ENCODE measurements at regions of chr1 and their contacts with region 1.

Region 1: DNA sequence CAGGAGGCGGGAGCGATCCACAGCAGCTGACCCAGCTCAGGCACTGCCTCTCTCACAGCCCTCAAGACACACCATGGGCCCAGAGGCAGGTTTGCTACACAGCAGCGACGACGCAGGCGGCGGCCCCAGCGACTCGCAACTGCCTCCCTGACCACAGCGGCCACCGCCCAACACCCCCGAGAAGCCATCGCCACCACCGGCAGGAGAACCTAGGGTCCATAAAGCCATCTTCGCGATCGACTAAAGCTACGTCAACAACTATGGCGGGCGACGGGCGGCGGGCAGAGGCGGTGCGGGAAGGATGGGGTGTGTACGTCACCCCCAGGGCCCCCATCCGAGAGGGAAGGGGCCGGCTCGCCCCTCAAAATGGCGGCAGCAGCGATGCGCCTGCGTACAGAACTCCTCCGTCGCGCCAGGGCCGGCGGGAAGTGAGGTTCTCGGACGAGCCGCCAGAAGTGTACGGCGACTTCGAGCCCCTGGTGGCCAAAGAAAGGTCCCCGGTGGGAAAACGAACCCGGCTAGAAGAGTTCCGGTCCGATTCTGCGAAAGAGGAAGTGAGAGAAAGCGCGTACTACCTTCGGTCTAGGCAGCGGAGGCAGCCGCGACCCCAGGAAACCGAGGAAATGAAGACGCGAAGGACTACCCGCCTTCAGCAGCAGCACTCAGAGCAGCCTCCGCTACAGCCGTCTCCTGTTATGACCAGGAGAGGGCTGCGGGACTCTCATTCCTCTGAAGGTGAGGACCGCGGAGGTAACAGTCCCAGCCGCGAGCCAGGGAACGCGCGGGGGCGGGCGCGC is at the start of gene TOR1AIP1:
- H3K4me3 Mint-ChIP-seq: peak within 1 kb of the TSS; percentile 85
- H3K27ac Mint-ChIP-seq: peak within 1 kb of the TSS; percentile 98
- H3K4me1 Mint-ChIP-seq: peaks cover 23% of the 10 kb centered on the region
- H3K27me3 Mint-ChIP-seq: no peaks in the 10 kb centered on the region

Region 2: DNA sequence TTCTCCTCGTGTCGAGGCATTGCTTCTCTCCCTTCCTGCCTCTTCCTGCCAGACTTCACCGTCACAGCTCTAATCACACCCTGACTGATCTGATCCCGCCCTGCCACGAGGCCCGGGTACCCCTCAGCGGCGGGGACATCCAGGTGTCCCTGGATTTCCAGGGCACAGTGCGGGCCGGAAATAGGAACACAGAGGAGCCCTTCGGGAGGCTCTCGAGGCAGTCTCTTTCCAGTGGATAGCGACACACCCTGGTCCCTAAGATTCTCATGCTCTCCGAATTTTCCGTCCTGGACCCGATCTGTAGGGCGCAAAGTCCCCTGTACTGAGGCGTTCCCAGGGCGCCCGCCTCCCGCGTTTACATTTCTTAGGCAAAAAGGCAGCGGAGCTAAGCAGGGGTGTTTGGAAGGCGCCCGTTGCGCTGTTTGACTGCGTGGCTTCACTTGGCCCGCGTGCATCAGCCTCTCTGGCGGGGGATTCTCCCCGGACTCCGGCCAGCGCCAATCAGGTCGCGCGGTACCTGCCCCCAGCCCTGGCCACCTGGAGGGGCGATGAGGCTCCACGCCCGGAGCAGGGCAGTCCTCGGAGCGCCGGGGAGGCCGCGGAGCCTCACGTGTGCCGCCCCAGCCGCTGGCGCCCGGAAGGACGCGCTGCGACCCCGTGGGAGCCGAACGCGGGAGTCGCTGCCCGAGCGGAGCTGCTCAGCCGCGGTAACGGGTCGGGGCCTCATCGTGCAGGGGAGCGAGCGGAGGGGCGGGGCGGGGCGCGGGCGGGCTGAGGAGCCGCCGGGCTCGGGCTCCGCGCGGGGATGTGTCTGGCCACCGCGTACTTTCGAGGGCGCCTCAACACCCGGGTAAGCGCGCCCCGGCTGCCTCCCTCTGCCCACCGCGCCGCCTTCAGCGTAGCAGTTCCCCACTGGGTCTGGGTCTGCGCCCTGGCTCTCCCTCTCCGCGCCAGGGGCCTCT is 139.4 kb before region 1 on chr1 and contains the start of gene FAM163A:
- intact Hi-C with region 1: no loop called
- H3K4me3 Mint-ChIP-seq: peak within 1 kb of the TSS; percentile 41
- H3K27ac Mint-ChIP-seq: no peak within 1 kb of the TSS
- H3K4me1 Mint-ChIP-seq: peaks cover 13% of the 10 kb centered on the region
- H3K27me3 Mint-ChIP-seq: peaks cover 73% of the 10 kb centered on the region

Region 3: GRCh38 chr1:179954493-179955297 is 72.3 kb after region 1 on chr1 and contains the start of gene CEP350:
- intact Hi-C with region 1: loop called (anchors 2 kb)
- H3K4me3 Mint-ChIP-seq: peak within 1 kb of the TSS; percentile 82
- H3K27ac Mint-ChIP-seq: peak within 1 kb of the TSS; percentile 95
- H3K4me1 Mint-ChIP-seq: peaks cover 44% of the 10 kb centered on the region
- H3K27me3 Mint-ChIP-seq: no peaks in the 10 kb centered on the region

Region 4: GRCh38 chr1:180154325-180155181 is 272.1 kb after region 1 on chr1 and contains the start of gene QSOX1:
- intact Hi-C with region 1: loop called (anchors 10 kb)
- H3K4me3 Mint-ChIP-seq: peak within 1 kb of the TSS; percentile 98
- H3K27ac Mint-ChIP-seq: peak within 1 kb of the TSS; percentile 98
- H3K4me1 Mint-ChIP-seq: peaks cover 59% of the 10 kb centered on the region
- H3K27me3 Mint-ChIP-seq: no peaks in the 10 kb centered on the region